ENCODE measurements at regions of chr4 and their contacts with region 1.

Region 1: GRCh38 chr4:15882675-15883086 is 55.9 kb downstream of the FGFBP1 start:
- DNase-seq: no peak
- ATAC-seq: peak; percentile 98
- H3K4me3 ChIP-seq: no peak overlapping the region
- H3K27ac ChIP-seq: no peak overlapping the region
- H3K4me1 ChIP-seq: no peaks in the 10 kb centered on the region
- H3K27me3 ChIP-seq: no peaks in the 10 kb centered on the region
- CTCF ChIP-seq: peak; percentile 89

Region 2: DNA sequence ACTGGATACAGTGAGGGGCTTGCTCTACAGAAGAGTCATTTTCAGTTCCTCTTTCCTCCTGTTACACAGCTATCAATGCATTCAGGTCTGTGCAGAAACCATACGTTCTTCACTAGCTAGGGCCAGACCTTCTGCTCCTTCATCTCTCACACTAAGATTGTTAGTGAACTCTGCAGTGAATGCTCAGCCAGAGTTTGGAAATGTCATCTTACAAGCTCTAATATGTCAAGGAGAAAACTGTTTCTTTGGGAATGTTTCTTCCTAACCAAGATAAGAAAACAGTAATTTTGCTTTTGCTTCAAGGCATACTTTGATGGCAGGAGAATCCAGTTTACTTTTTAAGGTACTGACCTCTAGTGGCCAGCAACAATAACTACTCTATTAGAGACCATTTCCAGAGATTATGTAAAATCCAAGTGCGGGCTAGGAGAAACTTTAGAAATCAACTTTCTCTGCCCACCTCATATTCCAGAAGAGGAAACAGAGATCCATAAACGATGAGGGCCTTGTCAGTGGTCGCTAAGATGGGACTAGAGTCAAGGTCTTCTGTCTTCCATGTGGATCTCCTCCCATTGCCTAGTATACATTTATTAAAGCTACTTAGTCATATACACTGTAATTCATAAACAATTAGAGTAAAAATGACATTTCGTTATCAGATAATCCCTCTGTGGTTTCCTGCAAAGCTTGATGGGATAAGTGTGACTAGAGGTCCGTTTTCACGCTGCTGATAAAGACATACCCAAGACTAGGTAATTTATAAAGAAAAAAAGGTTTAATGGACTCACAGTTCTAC is 425.1 kb before region 1 on chr4:
- intact Hi-C with region 1: no loop called
- DNase-seq: no peak
- ATAC-seq: peak; percentile 88
- H3K4me3 ChIP-seq: no peak overlapping the region
- H3K27ac ChIP-seq: peak overlapping the region; percentile 33
- H3K4me1 ChIP-seq: peaks cover 5% of the 10 kb centered on the region
- H3K27me3 ChIP-seq: no peaks in the 10 kb centered on the region
- CTCF ChIP-seq: peak; percentile 75

Region 3: DNA sequence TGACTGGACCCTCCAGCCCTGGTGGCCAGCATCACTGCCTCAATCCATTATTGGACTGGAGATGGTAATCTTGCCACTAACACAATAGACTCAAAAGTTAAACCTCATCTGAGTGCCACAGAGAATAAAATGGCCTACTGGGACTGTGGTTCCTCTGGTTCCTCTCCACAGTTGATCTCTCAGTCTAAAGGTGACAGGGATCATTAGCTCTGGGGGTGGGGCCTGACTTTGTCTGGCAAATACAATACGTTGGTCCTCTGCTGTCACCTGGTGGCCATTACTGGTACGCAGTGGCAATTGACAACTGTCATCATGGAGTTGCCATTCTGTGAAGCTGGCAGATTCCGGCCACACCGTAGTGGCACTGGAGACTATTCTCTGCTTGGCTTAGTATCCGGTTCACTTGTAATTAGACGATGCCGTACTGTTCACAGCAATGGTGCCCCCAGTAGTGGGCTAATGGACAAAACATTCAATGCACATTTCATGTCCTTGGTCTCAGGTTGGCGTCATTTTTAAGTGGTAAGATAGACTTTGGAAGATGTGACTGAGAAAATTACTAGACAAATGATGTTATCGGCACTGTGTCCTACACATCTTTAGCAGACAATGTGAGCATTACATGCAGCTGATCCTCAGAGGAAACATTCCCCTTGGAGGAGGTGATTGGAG is 73.6 kb after region 1 on chr4:
- intact Hi-C with region 1: loop called (anchors 5 kb)
- DNase-seq: peak; percentile 82
- ATAC-seq: peak; percentile 100
- H3K4me3 ChIP-seq: no peak overlapping the region
- H3K27ac ChIP-seq: no peak overlapping the region
- H3K4me1 ChIP-seq: no peaks in the 10 kb centered on the region
- H3K27me3 ChIP-seq: no peaks in the 10 kb centered on the region
- CTCF ChIP-seq: peak; percentile 89

Measured in upper lobe of right lung (tissue), 1 donor.